ENCODE measurements at regions of chr12 and their contacts with region 1.

Region 1: DNA sequence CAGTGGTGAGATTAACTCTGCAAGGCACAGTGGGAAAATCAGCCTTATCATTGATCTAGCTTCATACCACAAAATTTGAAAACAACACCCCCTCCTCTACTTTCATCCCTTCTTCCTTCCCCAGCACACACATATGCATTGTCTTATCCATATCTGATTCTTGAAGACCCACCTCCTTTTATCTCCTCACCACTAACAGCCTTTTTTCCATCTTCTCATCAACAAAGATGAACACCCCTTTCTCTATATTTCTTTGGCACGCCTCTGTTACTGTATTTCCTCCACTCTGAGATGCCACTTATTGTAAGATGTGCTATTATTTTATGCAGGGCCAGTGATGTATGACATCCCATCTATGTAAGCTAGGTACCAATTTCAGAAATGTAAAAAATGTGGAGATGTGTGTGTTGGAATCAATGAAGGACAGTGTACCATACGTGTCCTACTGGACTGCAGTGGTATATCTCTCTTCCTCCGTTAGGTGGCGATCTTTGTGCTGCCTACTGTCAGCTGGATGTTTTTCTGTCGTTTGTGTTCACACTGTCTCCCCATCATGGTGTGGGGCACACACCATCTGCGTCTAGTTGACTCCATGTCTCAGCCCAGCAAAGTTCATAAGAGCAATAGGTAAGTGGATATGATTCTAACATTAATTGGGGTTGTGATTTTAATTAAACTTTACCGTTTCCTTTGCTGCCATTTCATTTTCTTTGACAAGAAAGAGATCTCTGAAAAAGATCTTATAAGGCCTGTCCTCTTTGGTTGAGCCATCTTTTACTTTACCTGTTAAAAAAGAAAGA is 24.0 kb downstream of the CCDC38 start:
- DNase-seq: peak; percentile 65
- H3K4me3 Mint-ChIP-seq: no peak overlapping the region
- H3K27ac Mint-ChIP-seq: no peak overlapping the region
- H3K4me1 Mint-ChIP-seq: no peaks in the 10 kb centered on the region
- H3K27me3 Mint-ChIP-seq: peaks cover 14% of the 10 kb centered on the region

Region 2: GRCh38 chr12:95942524-95943329 is 24.3 kb after region 1 on chr12 and contains the start of gene CCDC38:
- CTCF ChIA-PET with region 1: interaction called, 11 read pairs
- DNase-seq: peak; percentile 91
- H3K4me3 Mint-ChIP-seq: peak within 1 kb of the TSS; percentile 91
- H3K27ac Mint-ChIP-seq: peak within 1 kb of the TSS; percentile 81
- H3K4me1 Mint-ChIP-seq: peaks cover 9% of the 10 kb centered on the region
- H3K27me3 Mint-ChIP-seq: peaks cover 19% of the 10 kb centered on the region

Region 3: DNA sequence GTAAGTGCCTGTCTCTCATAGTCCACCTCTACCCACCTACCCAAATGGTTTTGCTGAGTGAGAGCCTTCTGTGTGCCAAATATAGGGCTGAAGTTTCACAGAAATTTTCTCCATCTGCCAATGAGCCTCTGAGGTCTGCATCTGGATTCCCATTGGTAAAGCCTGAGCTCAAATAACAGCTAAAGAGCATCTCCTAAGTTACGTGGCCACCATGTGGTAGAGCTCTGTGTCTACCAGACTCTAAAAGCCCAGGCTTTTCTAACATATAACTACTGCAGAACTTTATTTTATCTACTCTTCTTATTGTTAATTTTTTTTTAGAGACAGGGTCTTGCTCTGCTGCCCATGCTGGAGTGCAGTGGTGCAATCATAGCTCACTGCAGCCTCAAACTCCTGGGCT is 40.7 kb after region 1 on chr12:
- CTCF ChIA-PET with region 1: interaction called, 12 read pairs
- DNase-seq: no peak
- H3K4me3 Mint-ChIP-seq: no peak overlapping the region
- H3K27ac Mint-ChIP-seq: no peak overlapping the region
- H3K4me1 Mint-ChIP-seq: no peaks in the 10 kb centered on the region
- H3K27me3 Mint-ChIP-seq: peaks cover 11% of the 10 kb centered on the region

Region 4: DNA sequence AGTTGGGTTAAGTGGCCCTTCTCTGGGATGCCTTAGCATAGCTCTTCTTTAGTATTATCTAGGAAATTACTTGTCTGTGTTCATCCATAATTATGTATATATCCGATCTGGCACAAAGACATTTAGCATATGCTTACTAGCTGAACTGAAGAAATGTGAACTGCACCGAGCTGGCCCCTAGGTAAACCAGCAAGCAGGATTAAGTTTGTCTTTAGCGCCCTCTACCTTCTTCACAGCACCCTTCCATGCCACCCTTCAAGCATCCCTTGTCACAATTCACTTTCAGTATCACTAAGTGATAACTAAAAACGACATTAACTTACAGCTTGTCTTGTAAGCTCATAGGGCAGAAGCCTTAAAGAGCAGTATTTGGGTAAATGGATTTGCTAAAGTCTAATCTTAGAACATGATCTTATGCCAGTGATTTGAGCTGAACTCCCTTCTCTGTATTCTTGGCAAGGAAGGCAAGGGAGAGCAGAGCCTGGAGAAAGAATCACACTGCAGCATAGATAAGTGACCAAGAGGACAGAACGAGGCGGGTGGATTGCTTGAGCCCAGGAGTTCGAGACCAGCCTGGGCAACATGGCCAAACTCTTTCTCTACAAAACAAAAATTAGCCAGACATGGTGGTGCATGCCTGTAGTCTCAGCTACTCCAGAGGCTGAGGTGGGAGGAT is 80.4 kb after region 1 on chr12:
- CTCF ChIA-PET with region 1: interaction called, 80 read pairs
- DNase-seq: peak; percentile 66
- H3K4me3 Mint-ChIP-seq: no peak overlapping the region
- H3K27ac Mint-ChIP-seq: peak overlapping the region; percentile 52
- H3K4me1 Mint-ChIP-seq: peaks cover 7% of the 10 kb centered on the region
- H3K27me3 Mint-ChIP-seq: no peaks in the 10 kb centered on the region

Measured in activated naive CD4-positive, alpha-beta T cell treated with anti-CD3 and anti-CD28 coated beads, Interleukin-2, amount 10 ng/mL, durations not matched to agents 7 days and 5 days (primary cell).